ENCODE measurements at regions of chr12 and their contacts with region 1.

Region 1: DNA sequence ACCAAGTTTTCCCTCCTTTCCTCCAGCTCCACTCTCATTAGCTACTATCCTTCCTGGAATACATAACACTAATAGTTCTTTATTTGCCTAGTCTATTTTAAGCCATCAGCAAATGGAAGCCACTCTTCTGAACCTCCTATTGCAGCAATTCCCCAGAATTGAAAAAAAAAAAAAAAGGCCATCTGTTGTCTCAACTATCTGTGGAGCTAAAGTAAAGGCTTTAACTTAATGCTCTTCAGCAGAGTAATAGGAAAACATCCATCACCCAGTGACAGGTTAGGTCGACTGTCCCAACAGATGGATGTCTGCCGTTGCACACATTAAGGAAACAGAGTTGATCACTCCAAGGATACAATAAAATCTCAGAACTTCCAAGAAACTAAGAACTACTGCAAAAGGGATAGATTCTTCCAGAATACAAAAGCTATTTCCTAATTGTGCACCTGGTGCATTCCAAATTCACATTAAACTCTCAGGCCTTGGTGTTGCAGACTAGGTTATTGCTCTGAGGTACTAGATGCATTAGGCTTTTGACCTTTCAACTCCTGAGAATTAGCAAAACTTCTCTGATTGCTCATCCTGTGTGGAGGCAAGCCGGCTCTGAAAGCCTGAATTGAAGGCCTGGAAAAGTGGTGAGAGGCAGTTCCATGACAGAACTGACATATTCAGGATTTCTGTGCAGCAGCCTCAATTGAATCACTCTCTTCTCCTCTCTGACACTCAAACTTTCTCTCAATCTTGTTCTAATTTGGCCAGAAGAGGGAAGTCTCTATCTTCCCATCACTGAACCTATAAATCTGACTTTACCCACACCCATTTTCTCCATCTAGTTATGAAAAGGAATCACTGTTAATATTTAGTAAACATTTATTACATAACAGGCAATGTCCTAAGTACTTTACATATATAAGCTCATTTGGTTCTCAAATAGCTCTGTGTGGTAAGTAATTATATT is 238.4 kb upstream of the HMGA2 start:
- DNase-seq: peak; percentile 26

Region 2: DNA sequence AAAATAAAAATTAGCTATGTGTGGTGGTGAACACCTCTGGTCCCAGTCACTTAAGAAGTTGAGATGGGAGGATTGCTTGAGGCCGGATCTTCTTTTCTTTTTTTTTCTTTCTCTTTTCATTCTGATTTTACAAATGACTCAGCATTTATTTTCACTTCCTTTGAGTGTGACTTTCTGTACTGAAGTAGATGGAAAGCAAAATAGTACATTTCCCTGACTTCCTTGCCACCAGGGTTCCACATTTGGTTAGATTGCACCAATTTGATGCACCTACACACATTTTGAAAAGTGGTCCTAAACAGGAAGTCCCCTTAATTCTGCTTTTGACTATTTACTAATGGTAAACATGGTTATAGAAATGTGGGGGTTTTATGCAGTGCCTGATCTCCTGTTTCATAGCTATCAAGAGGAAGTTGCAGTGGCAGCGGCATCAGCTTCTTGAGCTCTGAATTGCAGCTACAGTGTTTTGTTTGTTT is 429.5 kb before region 1 on chr12:
- in situ Hi-C with region 1: no loop called
- DNase-seq: peak; percentile 80

Region 3: GRCh38 chr12:66035288-66035966 is 449.5 kb after region 1 on chr12:
- in situ Hi-C with region 1: loop called (anchors 25 kb)
- DNase-seq: peak; percentile 66